WTC11 (cell line): ENCODE measurements at regions of chr12 and their contacts with region 1.

Region 1: DNA sequence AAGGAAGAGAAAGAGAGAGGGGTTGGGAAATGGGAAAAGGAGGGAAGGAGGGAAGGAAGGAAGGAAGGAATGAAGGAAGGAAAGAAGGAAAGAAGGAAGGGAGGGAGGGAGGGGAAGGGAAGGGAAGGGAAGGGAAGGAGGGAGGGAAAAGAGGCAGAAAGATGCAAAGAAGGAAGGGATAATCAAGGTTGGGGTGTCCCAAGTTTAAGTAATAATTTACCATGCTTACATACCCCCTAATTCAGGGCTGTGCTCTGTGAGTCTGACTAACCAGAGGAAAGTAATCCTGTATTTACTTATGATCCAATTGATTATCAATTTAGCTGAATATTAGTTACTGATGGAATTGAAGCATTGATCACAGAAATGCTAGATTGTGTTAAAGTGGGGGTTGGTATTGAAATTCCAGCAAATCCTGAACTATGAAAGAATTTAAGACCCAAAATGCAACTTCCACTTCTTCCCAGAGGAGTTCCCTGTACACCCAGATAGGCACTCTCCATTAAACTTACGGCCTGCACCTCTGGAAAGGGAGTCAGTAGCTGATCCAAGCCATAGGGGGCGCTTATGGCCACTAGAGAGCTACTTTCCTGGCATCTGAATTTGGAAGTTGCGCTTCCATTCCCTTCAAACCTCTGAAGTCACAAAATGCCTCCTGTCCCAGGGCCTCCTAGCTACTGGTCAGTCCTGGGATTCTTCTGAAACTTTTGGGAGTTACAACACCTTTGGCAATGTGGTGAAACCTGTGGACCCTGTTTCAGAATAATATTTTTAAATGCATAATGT is 162.7 kb upstream of the PWP1 start:
- DNase-seq: peak; percentile 65
- ATAC-seq: peak; percentile 96
- H3K4me3 Mint-ChIP-seq: no peak overlapping the region
- H3K27ac Mint-ChIP-seq: no peak overlapping the region
- H3K4me1 Mint-ChIP-seq: no peaks in the 10 kb centered on the region; the same call in 1 of the 2 replicates
- H3K27me3 Mint-ChIP-seq: no peaks in the 10 kb centered on the region
- CTCF ChIP-seq: peak; percentile 48

Region 2: GRCh38 chr12:107539196-107539939 is 16.5 kb after region 1 on chr12:
- CTCF ChIA-PET with region 1: interaction called, 13 read pairs
- POLR2A ChIA-PET with region 1: no interaction called
- DNase-seq: no peak
- ATAC-seq: no peak
- H3K4me3 Mint-ChIP-seq: no peak overlapping the region
- H3K27ac Mint-ChIP-seq: no peak overlapping the region
- H3K4me1 Mint-ChIP-seq: peaks cover 16% of the 10 kb centered on the region
- H3K27me3 Mint-ChIP-seq: no peaks in the 10 kb centered on the region
- CTCF ChIP-seq: no peak

Region 3: GRCh38 chr12:107560165-107560908 is 37.5 kb after region 1 on chr12:
- CTCF ChIA-PET with region 1: interaction called, 14 read pairs
- POLR2A ChIA-PET with region 1: no interaction called
- DNase-seq: peak; percentile 15
- ATAC-seq: peak; percentile 86
- H3K4me3 Mint-ChIP-seq: no peak overlapping the region
- H3K27ac Mint-ChIP-seq: peak overlapping the region; percentile 46; the same call in 1 of the 2 replicates
- H3K4me1 Mint-ChIP-seq: peaks cover 14% of the 10 kb centered on the region
- H3K27me3 Mint-ChIP-seq: no peaks in the 10 kb centered on the region
- CTCF ChIP-seq: no peak